ENCODE measurements at regions of chr17 and their contacts with region 1.

Region 1: DNA sequence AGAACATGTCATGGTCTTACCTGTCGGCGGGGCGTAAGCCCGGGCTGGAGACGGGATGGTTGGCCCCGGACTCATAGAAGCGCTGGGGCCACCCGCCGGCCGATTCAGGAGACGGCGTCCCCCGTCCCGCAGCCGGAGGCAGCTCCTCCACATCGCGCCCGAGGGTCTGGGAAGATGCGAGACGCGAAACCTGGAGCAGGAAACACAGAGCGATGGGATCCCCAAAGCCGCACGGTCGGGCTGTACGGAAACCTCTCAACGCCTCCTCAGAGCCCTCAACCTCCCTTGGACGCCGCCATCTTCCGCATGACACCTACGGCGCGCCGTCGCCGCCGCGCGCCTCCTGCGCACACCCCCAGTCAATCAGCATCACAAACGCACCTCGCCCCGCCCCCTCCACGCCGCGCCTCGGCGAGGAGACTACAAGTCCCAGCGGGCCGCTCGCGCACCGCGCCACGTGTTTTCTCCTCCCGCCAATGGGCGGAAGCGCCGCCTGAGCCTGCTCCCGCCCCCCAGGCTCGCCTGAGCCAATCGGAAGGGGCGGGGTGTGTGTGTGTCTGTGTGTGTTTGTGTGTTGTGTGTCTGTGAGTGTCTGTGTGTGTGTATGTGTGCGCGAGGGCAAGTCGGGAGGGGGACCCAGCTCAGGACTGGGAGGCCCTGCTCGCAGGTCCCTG is at the starts of genes ATPAF2 and GID4:
- DNase-seq: peak; percentile 99
- ATAC-seq: peak; percentile 91 to 99 (median 94)
- H3K4me3 ChIP-seq: peak within 1 kb of the TSS; percentile 89
- H3K4me3 Mint-ChIP-seq: peak within 1 kb of the TSS; percentile 93
- H3K27ac ChIP-seq: peak within 1 kb of the TSS; percentile 75
- H3K27ac Mint-ChIP-seq: peak within 1 kb of the TSS; percentile 79 to 87
- H3K4me1 ChIP-seq: peaks cover 28% of the 10 kb centered on the region
- H3K4me1 Mint-ChIP-seq: peaks cover 45 to 52% of the 10 kb centered on the region in 2 donors
- H3K27me3 ChIP-seq: no peaks in the 10 kb centered on the region
- H3K27me3 Mint-ChIP-seq: no peaks in the 10 kb centered on the region
- CTCF ChIP-seq: no peak
- total RNA-seq, gene ATPAF2: 31.4 to 43.4 (median 41.5) TPM
- total RNA-seq, gene GID4: 6.6 to 10.0 (median 6.9) TPM

Region 2: GRCh38 chr17:17812211-17813057 is 226.6 kb before region 1 on chr17:
- intact Hi-C with region 1: no loop called
- DNase-seq: peak; percentile 76 to 78
- ATAC-seq: peak; percentile 66 to 79 (median 70)
- H3K4me3 ChIP-seq: no peak overlapping the region
- H3K4me3 Mint-ChIP-seq: no peak overlapping the region
- H3K27ac ChIP-seq: no peak overlapping the region
- H3K27ac Mint-ChIP-seq: no peak overlapping the region
- H3K4me1 ChIP-seq: peaks cover 19% of the 10 kb centered on the region
- H3K4me1 Mint-ChIP-seq: peaks cover 7 to 29% of the 10 kb centered on the region in 2 donors
- H3K27me3 ChIP-seq: no peaks in the 10 kb centered on the region
- H3K27me3 Mint-ChIP-seq: no peaks in the 10 kb centered on the region
- CTCF ChIP-seq: peak; percentile 100

Region 3: GRCh38 chr17:17972126-17972951 is 66.7 kb before region 1 on chr17 and contains the starts of genes DRC3 and TOM1L2:
- intact Hi-C with region 1: loop called (anchors 1 kb)
- DNase-seq: peak; percentile 99
- ATAC-seq: peak; percentile 87 to 96 (median 88)
- H3K4me3 ChIP-seq: peak within 1 kb of the TSS; percentile 72
- H3K4me3 Mint-ChIP-seq: peak within 1 kb of the TSS; percentile 99
- H3K27ac ChIP-seq: peak within 1 kb of the TSS; percentile 81
- H3K27ac Mint-ChIP-seq: peak within 1 kb of the TSS; percentile 95 to 96
- H3K4me1 ChIP-seq: peaks cover 13% of the 10 kb centered on the region
- H3K4me1 Mint-ChIP-seq: peaks cover 26 to 33% of the 10 kb centered on the region in 2 donors
- H3K27me3 ChIP-seq: no peaks in the 10 kb centered on the region
- H3K27me3 Mint-ChIP-seq: no peaks in the 10 kb centered on the region
- CTCF ChIP-seq: no peak
- total RNA-seq, gene DRC3: 0.26 to 0.78 TPM in 2 of 3 donors, not detected in the other
- total RNA-seq, gene TOM1L2: 35.7 to 43.2 (median 35.7) TPM

Measured in natural killer cell (primary cell).